Psoas muscle (tissue), 8 donors: ENCODE measurements at regions of chr11 and their contacts with region 1.

Region 1: GRCh38 chr11:6612213-6613041 is at the start of gene TAF10:
- DNase-seq: peak; percentile 98 to 99
- ATAC-seq: peak; percentile 92 to 96 (median 93)
- H3K4me3 ChIP-seq: peak within 1 kb of the TSS; percentile 80
- H3K27ac ChIP-seq: peak within 1 kb of the TSS; percentile 100
- H3K4me1 ChIP-seq: peaks cover 30% of the 10 kb centered on the region
- H3K27me3 ChIP-seq: no peaks in the 10 kb centered on the region
- CTCF ChIP-seq: peak; percentile 42
- total RNA-seq, gene TAF10: 70.4 to 119 (median 99.5) TPM

Region 2: DNA sequence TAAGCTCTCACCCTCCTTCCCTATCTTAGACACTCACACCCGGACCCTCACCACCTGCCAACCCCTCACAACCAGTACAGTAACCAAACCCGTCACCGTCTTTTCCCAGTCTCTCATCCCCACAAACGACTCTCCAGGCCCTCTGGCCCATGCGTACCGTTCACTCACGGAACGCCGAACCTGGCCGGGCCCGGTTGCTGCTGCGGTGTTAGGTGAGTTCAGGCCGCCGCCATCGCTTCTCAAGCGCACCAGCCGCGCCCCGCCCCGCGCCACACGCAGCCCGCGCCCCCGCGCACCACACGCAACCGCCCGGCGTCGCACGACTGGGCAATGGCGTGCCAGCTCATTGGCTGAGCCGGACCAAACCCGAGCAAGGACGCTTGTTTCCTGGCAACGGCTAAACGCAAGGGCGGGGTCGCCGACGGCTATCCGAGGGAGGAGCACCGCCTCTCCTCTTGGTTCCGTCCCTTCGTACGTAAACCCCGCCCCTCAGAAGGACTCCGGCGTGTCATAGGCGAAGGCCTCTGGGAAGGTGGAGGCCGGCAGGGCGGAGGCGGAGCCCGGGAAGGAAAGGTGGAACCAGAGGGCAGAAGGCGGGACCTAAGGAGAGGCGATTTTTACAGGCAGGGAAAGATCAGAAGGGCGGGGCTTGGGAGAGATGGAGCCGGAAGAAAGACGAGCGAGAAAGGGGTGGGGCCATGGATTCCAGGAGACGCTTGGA is 377.9 kb before region 1 on chr11 and contains the start of gene FHIP1B:
- intact Hi-C with region 1: loop called in 1 of 2 experiments (anchors 10 kb)
- DNase-seq: peak; percentile 100
- ATAC-seq: peak; percentile 97 to 99 (median 98)
- H3K4me3 ChIP-seq: peak within 1 kb of the TSS; percentile 83
- H3K27ac ChIP-seq: peak within 1 kb of the TSS; percentile 77
- H3K4me1 ChIP-seq: peaks cover 19% of the 10 kb centered on the region
- H3K27me3 ChIP-seq: no peaks in the 10 kb centered on the region
- CTCF ChIP-seq: no peak
- total RNA-seq, gene FHIP1B: 9.1 to 21.6 (median 15.6) TPM

Region 3: GRCh38 chr11:6481012-6481923 is 131.2 kb before region 1 on chr11 and contains the starts of genes ARFIP2 and TIMM10B:
- intact Hi-C with region 1: loop called (anchors 5 kb)
- DNase-seq: peak; percentile 98 to 99
- ATAC-seq: peak; percentile 98 to 99 (median 99)
- H3K4me3 ChIP-seq: peak within 1 kb of the TSS; percentile 93
- H3K27ac ChIP-seq: peak within 1 kb of the TSS; percentile 95
- H3K4me1 ChIP-seq: peaks cover 21% of the 10 kb centered on the region
- H3K27me3 ChIP-seq: no peaks in the 10 kb centered on the region
- CTCF ChIP-seq: no peak
- total RNA-seq, gene ARFIP2: 8.4 to 25.5 (median 15.5) TPM
- total RNA-seq, gene TIMM10B: 12.5 to 25.2 (median 16.1) TPM